Posterior cingulate gyrus (tissue), 11 donors: ENCODE measurements at regions of chr11 and their contacts with region 1.

Region 1: DNA sequence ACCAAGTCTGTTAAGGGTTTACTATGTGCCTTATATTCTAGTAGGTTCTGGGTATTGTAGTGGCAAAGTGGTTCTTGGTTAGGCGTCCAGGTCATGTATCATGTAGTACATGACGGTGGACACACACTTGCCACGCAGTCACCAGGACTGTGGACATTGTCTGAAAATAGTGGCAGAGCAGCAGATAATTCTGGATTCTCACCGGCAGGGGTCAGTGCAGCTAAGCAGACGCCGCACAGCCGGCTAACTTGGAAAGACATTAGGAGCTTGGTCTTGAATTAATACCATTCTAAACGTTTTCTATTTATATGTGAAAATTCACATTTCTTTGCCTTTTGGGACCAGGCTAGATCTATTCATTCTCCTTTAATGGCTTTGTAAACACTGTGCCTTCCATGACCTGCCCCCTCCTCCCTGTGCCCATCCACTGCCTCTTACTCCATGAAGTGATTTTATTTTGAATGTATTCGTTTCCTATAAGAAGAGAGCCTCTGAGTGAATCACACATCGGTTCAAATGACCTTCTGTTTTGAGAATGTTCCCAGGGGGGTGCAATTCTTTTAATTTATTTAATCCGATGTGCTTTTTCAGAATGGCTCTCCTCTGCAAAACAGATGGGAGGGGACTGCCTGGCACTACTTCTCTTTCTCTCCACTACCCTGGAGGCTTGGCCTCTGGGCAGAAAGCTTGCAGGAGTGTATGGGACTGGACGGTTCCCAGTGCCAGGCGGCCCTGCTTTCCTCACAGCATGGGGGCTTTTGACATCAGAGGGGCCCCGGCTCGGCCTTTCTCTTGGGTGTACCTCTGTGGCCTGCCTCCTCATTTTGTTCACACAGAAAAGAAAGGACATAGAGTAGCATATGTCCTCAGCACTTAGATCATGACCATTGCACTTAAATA is 378.0 kb downstream of the NTM start:
- DNase-seq: peak; percentile 55 to 97 (median 78)

Region 2: GRCh38 chr11:131530407-131530806 is 218.0 kb before region 1 on chr11:
- intact Hi-C with region 1: no loop called
- DNase-seq: peak in 5 of 10 donors; percentile 59 to 90 (median 69)

Region 3: GRCh38 chr11:131684111-131685060 is 64.0 kb before region 1 on chr11:
- intact Hi-C with region 1: no loop called
- DNase-seq: peak in 1 of 10 donors; percentile 82

Region 4: GRCh38 chr11:132028380-132029240 is 280.2 kb after region 1 on chr11:
- intact Hi-C with region 1: loop called (anchors 2 kb)
- DNase-seq: peak in 3 of 10 donors; percentile 40 to 48 (median 44)

Region 5: DNA sequence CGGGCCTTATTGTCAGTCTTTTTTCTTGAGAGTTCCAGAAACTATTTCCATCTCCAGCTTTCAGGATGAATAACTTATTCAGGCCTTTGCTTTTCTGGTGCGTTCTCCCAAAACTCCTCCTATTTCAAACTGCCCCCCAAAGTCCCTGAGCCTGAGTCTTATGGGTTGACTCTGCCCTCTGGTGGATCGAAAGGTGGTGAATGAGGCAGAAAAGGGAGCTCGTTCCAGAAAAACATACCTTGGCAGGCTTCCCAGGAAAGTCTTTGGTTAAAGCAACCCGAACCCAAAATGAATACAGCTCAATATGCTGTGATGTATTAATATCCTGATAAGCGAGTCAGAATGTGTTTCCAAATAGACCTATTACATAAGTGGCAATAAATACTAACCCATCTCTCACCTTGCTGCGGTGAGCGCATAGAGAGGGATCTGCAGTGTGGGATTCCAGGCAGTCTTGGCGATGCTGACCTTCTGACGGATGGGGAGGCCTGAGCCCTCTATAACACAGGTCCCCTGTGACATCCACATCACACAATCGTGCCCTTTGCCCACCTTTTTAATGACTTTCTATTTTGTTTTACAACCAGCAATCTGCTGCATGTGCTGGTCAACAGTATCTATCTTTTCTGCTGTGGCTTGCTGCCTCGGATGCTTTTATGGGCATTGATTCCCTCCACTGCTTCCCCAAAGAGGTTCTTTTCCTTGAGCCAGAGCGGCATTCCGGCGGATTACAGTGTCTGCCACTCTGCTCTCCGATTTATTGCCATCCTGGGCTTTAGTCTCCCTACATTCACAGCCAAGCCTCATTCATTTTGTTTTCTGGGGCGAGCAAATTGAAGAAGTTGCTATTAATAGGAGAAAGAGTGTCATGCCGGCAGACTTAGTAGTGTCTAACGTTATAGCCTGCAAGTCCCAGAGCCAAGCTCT is 378.8 kb after region 1 on chr11:
- intact Hi-C with region 1: loop called (anchors 5 kb)
- DNase-seq: peak in 6 of 10 donors; percentile 35 to 85 (median 62)